PC-9 (cell line): ENCODE measurements at regions of chr2 and their contacts with region 1.

Region 1: GRCh38 chr2:61016808-61017555 is 538 bp upstream of the PEX13 start:
- DNase-seq: peak; percentile 89 to 94
- H3K4me3 ChIP-seq: peak overlapping the region; percentile 87
- H3K27ac ChIP-seq: peak overlapping the region; percentile 98
- H3K4me1 ChIP-seq: peaks cover 52% of the 10 kb centered on the region
- H3K27me3 ChIP-seq: no peaks in the 10 kb centered on the region
- CTCF ChIP-seq: no peak

Region 2: GRCh38 chr2:60756191-60757041 is 260.6 kb before region 1 on chr2 and contains the start of gene PAPOLG:
- CTCF ChIA-PET with region 1: no interaction called
- POLR2A ChIA-PET with region 1: interaction called, 14 read pairs
- intact Hi-C with region 1: no loop called
- DNase-seq: peak; percentile 85 to 95
- H3K4me3 ChIP-seq: peak within 1 kb of the TSS; percentile 73
- H3K27ac ChIP-seq: peak within 1 kb of the TSS; percentile 41; the same call in 1 of the 2 replicates
- H3K4me1 ChIP-seq: peaks cover 18% of the 10 kb centered on the region
- H3K27me3 ChIP-seq: no peaks in the 10 kb centered on the region
- CTCF ChIP-seq: no peak
- total RNA-seq, gene PAPOLG: 13.5 and 13.7 TPM in 2 replicates

Region 3: GRCh38 chr2:60881047-60881932 is 135.7 kb before region 1 on chr2 and contains the start of gene REL:
- CTCF ChIA-PET with region 1: interaction called, 14 read pairs
- POLR2A ChIA-PET with region 1: no interaction called
- intact Hi-C with region 1: loop called (anchors 2 kb)
- DNase-seq: peak; percentile 74 to 92
- H3K4me3 ChIP-seq: peak within 1 kb of the TSS; percentile 78
- H3K27ac ChIP-seq: peak within 1 kb of the TSS; percentile 83
- H3K4me1 ChIP-seq: peaks cover 36% of the 10 kb centered on the region
- H3K27me3 ChIP-seq: no peaks in the 10 kb centered on the region
- CTCF ChIP-seq: no peak
- total RNA-seq, gene REL: 12.5 and 13.3 TPM in 2 replicates

Region 4: GRCh38 chr2:61006486-61007105 is 10.4 kb before region 1 on chr2:
- CTCF ChIA-PET with region 1: no interaction called
- POLR2A ChIA-PET with region 1: interaction called, 4 read pairs
- intact Hi-C with region 1: loop called (anchors 1 kb)
- DNase-seq: peak in 1 of 2 experiments; percentile 81
- H3K4me3 ChIP-seq: no peak overlapping the region
- H3K27ac ChIP-seq: peak overlapping the region; percentile 83
- H3K4me1 ChIP-seq: peaks cover 41% of the 10 kb centered on the region
- H3K27me3 ChIP-seq: no peaks in the 10 kb centered on the region
- CTCF ChIP-seq: no peak

Region 5: GRCh38 chr2:61065715-61066709 is 49.0 kb after region 1 on chr2 and contains the start of gene SANBR:
- CTCF ChIA-PET with region 1: no interaction called
- POLR2A ChIA-PET with region 1: interaction called, 3 read pairs
- intact Hi-C with region 1: loop called (anchors 5 kb)
- DNase-seq: peak in 1 of 2 experiments; percentile 95
- H3K4me3 ChIP-seq: peak within 1 kb of the TSS; percentile 84
- H3K27ac ChIP-seq: no peak within 1 kb of the TSS
- H3K4me1 ChIP-seq: peaks cover 8% of the 10 kb centered on the region
- H3K27me3 ChIP-seq: no peaks in the 10 kb centered on the region
- CTCF ChIP-seq: no peak
- total RNA-seq, gene SANBR: 12.6 and 13.8 TPM in 2 replicates

Region 6: DNA sequence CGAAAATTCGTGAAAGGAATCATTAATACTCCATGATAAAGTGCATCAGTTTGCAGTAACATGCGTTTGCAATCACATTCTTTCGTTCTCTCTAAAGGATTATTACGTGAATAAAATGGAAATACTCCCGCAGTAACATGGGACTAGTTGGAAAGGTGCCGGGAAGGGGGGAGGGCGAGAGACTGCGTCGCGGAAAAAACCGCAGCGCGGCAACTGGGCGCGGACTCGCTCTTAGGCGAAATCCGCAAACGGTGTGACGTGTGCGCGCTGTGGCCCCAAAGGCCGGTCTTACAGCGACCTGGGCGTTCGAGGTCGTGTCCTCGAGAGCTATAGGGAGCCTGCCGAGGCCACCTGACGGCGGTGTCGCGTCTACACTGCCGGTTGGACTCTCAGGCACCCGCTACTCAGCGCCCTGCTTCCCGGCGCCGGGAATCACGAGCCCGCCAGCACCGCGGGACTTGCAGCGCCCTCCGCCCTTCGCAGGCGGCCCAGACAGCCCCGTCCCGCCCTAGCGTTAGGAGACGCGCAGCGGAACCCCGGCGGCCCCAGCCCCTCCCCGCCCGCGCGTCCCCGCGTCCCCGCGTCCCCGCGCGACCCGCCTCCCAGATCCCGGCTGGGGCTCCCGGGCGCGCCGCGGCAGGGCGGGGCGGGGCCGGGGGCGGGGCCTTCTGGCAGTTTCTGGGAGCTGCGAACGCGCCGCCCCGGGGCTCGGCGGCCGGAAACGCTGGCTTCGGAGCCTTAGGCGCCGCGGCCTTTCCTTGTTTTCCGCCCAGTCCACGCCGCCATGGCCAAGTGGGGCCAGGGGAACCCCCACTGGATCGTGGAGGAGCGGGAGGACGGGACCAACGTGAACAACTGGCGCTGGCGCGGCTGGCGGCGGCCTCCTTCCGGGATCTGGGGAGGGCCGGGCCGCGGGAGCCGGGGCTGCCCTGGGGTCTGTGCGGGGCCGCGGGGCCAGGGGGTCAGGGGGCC is 160.1 kb after region 1 on chr2:
- CTCF ChIA-PET with region 1: no interaction called
- POLR2A ChIA-PET with region 1: no interaction called
- intact Hi-C with region 1: loop called (anchors 10 kb)
- DNase-seq: peak; percentile 81 to 99
- H3K4me3 ChIP-seq: peak overlapping the region; percentile 62
- H3K27ac ChIP-seq: peak overlapping the region; percentile 89
- H3K4me1 ChIP-seq: peaks cover 29% of the 10 kb centered on the region
- H3K27me3 ChIP-seq: no peaks in the 10 kb centered on the region
- CTCF ChIP-seq: no peak; the same call in 1 of the 2 replicates